ENCODE measurements at regions of chr1 and their contacts with region 1.

Region 1: DNA sequence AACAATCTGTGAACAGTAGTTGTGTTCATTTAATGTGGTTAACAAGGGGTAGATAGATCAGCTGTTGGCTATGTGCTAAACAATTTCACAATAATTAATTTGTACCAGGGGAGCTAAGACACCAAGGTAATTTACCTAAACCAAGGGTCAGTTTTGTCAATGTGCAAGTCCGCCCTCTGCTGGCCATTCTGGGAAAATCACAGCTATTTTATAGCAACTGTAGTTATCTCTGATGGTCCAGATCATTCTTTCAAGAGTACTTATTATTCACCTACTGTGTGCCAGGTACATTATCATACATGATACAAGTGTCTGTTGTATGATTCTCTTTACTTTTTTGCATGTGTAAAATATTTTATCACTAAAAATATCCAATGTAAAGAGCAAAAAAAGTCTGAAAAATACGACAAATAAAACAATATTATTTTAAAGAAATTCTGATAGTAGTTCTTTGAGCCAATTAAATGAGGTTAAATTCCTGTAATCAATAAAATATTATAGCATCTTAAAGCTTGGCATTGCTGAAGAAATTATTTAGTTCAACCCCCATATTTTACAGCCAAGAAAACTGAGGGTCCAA is 312.3 kb upstream of the FAM78B start:
- DNase-seq: peak; percentile 15 to 64
- H3K4me3 ChIP-seq: no peak overlapping the region
- H3K4me1 ChIP-seq: no peaks in the 10 kb centered on the region
- H3K27me3 ChIP-seq: no peaks in the 10 kb centered on the region

Region 2: GRCh38 chr1:165933446-165934178 is 545.5 kb before region 1 on chr1:
- in situ Hi-C with region 1: loop called (anchors 10 kb)
- DNase-seq: no peak
- H3K4me3 ChIP-seq: no peak overlapping the region
- H3K4me1 ChIP-seq: no peaks in the 10 kb centered on the region
- H3K27me3 ChIP-seq: no peaks in the 10 kb centered on the region

Region 3: DNA sequence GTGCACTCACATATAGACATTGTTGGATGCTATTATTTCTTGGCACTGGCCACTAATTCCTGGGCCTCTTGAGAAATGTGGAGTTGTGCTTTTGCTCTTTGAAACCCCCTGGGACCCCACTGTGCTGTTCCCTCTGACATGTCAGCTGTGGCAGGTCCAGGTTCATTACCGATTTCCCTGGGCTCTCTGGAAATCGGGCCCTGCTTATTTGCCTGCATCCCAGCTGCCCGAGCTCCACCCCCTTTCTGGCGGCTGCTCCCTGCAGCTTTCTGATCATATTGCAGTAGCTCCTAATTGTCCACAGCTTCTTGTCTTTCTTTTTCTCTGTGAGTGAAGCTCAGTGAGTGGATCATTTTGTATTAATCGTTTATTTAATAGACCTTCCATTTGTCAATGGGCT is 128.7 kb before region 1 on chr1:
- in situ Hi-C with region 1: no loop called
- DNase-seq: no peak
- H3K4me3 ChIP-seq: no peak overlapping the region
- H3K4me1 ChIP-seq: no peaks in the 10 kb centered on the region
- H3K27me3 ChIP-seq: no peaks in the 10 kb centered on the region

Region 4: GRCh38 chr1:166875734-166876539 is 396.8 kb after region 1 on chr1 and contains the start of gene TADA1:
- in situ Hi-C with region 1: no loop called
- DNase-seq: peak; percentile 97 to 99
- H3K4me3 ChIP-seq: peak within 1 kb of the TSS; percentile 77
- H3K4me1 ChIP-seq: peaks cover 15% of the 10 kb centered on the region
- H3K27me3 ChIP-seq: no peaks in the 10 kb centered on the region